ENCODE measurements at regions of chr12 and their contacts with region 1.

Region 1: DNA sequence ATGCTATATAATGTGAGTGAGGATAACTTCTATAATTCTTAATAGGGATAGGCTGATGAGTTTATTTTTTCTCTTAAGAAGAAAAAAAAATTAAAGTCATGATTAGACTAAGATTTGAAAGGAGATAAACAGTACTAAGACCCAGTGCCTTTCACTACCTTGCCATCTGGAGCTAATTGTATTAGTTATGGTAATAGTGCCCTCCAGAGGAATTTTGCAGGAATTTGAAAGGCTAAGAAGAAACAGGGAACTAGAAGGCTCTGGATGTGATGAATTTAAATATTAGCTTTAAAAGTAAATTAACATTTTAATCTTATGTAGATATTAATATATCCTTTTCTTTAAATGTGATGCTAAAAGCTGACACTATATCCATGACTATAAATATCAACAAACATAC is 36.6 kb upstream of the PIK3C2G start:
- DNase-seq: peak; percentile 57
- ATAC-seq: peak; percentile 74
- H3K4me3 ChIP-seq: no peak overlapping the region
- H3K27ac ChIP-seq: no peak overlapping the region
- H3K4me1 ChIP-seq: no peaks in the 10 kb centered on the region
- H3K27me3 ChIP-seq: no peaks in the 10 kb centered on the region
- CTCF ChIP-seq: peak; percentile 59

Region 2: DNA sequence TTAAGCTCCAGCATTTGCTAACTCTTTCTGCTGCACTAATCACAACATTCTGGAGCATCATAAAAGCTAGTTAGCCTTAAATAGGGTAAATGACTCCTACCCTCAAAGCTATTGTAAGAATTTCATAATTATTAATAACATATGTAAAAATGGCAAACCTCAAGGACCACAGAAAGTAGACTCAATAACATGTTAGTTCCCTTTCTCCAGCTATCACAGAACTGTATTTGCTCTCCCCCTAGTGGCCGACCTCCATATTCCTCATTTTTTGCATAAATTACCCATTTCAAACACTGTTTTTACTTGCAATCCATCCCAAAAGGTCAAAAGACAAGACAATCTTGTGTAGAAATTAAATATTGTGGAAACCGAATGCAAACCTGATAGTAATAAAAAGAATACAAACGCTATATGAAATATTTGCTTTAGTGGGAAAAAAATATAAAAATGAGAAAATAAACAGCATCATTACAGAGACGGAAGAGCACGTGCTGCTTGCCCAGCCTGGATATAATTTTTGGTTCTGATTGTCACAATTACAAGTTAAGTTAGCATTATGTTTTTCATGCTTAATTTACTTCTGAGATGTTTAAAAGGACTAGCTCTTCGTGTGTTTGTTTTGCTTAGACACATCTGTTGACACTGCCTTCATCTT is 232.6 kb before region 1 on chr12:
- CTCF ChIA-PET with region 1: no interaction called
- POLR2A ChIA-PET with region 1: no interaction called
- intact Hi-C with region 1: loop called (anchors 5 kb)
- DNase-seq: peak; percentile 53
- ATAC-seq: 0 out of 2 replicates have a peak, but pooled peaks have one; percentile 27
- H3K4me3 ChIP-seq: no peak overlapping the region
- H3K27ac ChIP-seq: no peak overlapping the region
- H3K4me1 ChIP-seq: no peaks in the 10 kb centered on the region
- H3K27me3 ChIP-seq: no peaks in the 10 kb centered on the region
- CTCF ChIP-seq: peak; percentile 75

Region 3: GRCh38 chr12:18183141-18183540 is 41.6 kb before region 1 on chr12:
- CTCF ChIA-PET with region 1: no interaction called
- POLR2A ChIA-PET with region 1: no interaction called
- intact Hi-C with region 1: no loop called
- DNase-seq: no peak
- ATAC-seq: no peak
- H3K4me3 ChIP-seq: no peak overlapping the region
- H3K27ac ChIP-seq: no peak overlapping the region
- H3K4me1 ChIP-seq: no peaks in the 10 kb centered on the region
- H3K27me3 ChIP-seq: no peaks in the 10 kb centered on the region
- CTCF ChIP-seq: no peak